ENCODE measurements at regions of chr5 and their contacts with region 1.

Region 1: DNA sequence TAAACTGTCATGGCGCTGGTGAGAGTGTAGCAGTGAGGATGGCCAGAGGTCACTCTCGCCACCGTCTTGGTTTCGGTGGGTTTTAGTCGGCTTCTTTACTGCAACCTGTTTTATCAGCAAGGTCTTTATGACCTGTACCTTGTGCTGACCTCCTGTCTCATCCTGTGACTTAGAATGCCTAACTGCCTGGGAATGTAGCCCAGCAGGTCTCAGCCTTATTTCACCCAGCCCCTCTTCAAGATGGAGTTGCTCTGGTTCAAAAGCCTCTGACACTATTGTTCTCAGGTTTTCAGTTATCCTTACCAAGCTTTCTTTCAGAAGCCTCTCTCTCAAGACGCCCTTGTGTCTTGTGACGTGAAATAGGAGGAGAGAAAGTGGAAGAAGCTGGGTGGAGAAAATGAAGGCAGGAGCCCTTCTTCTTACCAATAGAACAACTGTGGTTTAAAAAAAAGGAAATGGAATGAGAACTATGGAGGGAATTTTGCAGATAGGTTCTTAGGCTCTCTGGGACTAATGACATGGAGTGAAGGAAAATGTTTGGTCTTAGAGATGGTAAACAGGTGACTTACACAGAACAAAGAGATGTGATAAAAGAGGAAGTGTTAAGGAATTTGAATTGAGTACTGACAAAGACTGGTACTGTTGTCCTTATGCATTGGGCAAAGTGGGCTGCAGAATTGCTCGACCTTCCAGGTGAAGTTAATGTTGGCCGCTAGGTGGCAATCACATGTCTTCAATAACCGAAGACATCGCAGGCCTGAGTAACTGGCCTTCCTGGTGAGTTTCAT is 133.3 kb upstream of the RAI14 start:
- DNase-seq: peak; percentile 64
- H3K4me3 ChIP-seq: peak overlapping the region in 1 of 2 experiments; percentile 29; a peak in 1 of 4 replicates
- H3K27ac ChIP-seq: peak overlapping the region in 1 of 2 experiments; percentile 79; a peak in 3 of 4 replicates
- H3K4me1 ChIP-seq: peaks cover 0 to 17% of the 10 kb centered on the region in 2 experiments; a peak in 2 of 4 replicates
- H3K27me3 ChIP-seq: no peaks in the 10 kb centered on the region
- CTCF ChIP-seq: peak; percentile 83
- EP300 ChIP-seq: no peak
- RAD21 ChIP-seq: peak; percentile 85

Region 2: GRCh38 chr5:34511915-34512314 is 10.9 kb before region 1 on chr5:
- CTCF ChIA-PET with region 1: interaction called, 10 read pairs
- POLR2A ChIA-PET with region 1: no interaction called
- DNase-seq: no peak
- H3K4me3 ChIP-seq: no peak overlapping the region
- H3K27ac ChIP-seq: no peak overlapping the region
- H3K4me1 ChIP-seq: peaks cover 0 to 5% of the 10 kb centered on the region in 2 experiments; a peak in 1 of 4 replicates
- H3K27me3 ChIP-seq: no peaks in the 10 kb centered on the region
- CTCF ChIP-seq: no peak
- EP300 ChIP-seq: no peak
- RAD21 ChIP-seq: no peak

Region 3: DNA sequence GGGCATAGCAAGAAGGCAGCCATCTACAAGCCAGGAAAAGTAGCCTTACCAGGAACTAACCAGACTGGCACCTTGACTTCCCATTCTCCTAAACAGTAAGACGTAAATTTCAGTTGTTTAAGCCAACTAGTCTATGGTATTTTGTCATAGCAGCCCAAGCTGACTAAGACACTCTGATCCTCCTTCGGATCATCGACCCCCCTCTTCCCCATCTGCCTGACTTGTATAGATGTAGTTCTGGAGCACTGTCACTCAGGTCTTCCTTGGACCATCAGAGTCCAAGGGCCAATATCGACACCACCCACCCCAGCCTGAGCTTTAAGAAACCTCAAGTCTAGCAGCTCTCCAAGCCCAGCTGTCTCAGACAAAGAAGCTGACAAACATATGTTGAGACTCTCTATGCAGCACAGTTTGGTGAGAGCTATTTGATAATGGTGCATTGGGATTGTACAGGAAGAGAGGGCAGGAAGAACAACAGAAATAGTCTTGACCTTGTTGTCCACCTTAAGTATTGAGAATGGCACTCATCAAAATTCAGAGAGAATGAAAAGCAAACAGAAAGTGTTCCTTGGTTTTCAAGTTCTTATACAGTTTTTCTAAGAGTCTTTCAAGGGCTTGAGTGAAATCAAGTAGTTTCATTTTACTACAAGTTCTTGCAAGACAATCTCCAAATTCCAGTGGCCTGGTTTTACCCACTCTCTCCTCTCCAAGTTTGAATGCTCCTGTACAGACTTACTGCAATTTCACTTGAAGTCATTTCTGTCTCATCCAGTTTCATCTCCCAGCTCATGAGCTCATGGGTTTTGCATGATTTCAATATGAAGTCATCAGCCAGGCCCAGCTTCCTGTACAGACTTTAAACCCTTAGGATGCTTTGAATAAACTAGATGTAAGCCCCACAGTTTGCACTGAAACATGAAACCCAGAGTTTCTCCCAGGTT is 11.1 kb after region 1 on chr5:
- CTCF ChIA-PET with region 1: interaction called, 17 read pairs
- POLR2A ChIA-PET with region 1: no interaction called
- DNase-seq: no peak
- H3K4me3 ChIP-seq: no peak overlapping the region
- H3K27ac ChIP-seq: peak overlapping the region; percentile 78 to 96
- H3K4me1 ChIP-seq: peaks cover 3 to 29% of the 10 kb centered on the region in 2 experiments
- H3K27me3 ChIP-seq: no peaks in the 10 kb centered on the region
- CTCF ChIP-seq: no peak
- EP300 ChIP-seq: 0 out of 4 replicates have a peak, but pooled peaks of 1 of the 2 experiments have one; percentile 22
- RAD21 ChIP-seq: no peak

Measured in SK-N-SH (cell line).